CD8-positive, alpha-beta memory T cell (primary cell): ENCODE measurements at regions of chr11 and their contacts with region 1.

Region 1: DNA sequence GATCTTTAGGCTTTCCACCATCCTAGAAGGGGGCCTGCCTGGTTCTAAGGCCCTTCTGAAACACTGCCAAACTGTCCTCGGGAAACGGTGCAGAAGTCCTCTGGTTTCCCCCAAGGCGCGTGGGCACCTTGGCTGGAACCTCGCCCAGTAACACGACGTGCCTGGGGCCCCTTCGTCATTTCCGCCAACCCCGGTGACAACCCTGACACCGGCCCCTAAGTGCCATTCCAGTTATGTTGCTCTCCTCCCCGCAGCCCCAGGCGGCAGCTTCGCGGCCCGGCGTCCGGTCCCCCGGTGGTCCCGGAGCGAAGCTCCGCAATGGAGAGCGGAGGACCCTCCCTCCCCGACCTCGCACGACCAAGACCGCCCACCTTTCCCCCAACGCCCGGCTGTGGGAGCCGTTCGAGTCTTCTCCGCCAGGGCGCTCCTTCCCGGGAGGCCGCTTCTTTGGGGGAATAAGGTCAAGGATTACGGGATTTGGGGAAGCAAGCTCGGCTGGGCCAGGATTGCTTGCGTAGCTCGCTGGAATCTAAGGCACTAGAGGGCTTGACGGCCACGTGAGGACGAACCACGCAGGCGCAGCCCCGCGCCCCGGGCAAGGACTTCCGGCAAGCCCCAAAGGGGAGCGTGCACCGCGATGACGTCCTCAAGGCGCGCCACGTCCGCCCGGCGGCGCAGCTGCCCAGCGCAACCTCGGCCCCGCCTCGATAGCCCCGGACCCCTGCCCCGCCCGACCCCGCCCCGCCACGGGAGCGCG is 626 bp downstream of the RNH1 start:
- DNase-seq: peak; percentile 96 to 98 (median 96)
- H3K4me3 ChIP-seq: peak overlapping the region; percentile 95
- H3K4me3 Mint-ChIP-seq: peak overlapping the region; percentile 89 to 100 (median 98)
- H3K27ac ChIP-seq: peak overlapping the region; percentile 100
- H3K27ac Mint-ChIP-seq: peak overlapping the region; percentile 97 to 100 (median 100)
- H3K4me1 ChIP-seq: peaks cover 31% of the 10 kb centered on the region
- H3K4me1 Mint-ChIP-seq: peaks cover 11 to 38% (median 21%) of the 10 kb centered on the region in 3 donors
- H3K27me3 ChIP-seq: no peaks in the 10 kb centered on the region
- H3K27me3 Mint-ChIP-seq: peaks cover 0 to 4% of the 10 kb centered on the region in 2 donors

Region 2: GRCh38 chr11:396948-397548 is 109.4 kb before region 1 on chr11:
- CTCF ChIA-PET with region 1: no interaction called
- POLR2A ChIA-PET with region 1: no interaction called
- DNase-seq: peak in 4 of 5 donors; percentile 36 to 72 (median 42)
- H3K4me3 ChIP-seq: no peak overlapping the region
- H3K4me3 Mint-ChIP-seq: peak overlapping the region in 5 of 7 donors; percentile 1 to 53 (median 47)
- H3K27ac ChIP-seq: no peak overlapping the region
- H3K27ac Mint-ChIP-seq: no peak overlapping the region
- H3K4me1 ChIP-seq: peaks cover 4% of the 10 kb centered on the region
- H3K4me1 Mint-ChIP-seq: peaks cover 0 to 11% (median 0%) of the 10 kb centered on the region in 3 donors
- H3K27me3 ChIP-seq: no peaks in the 10 kb centered on the region
- H3K27me3 Mint-ChIP-seq: peaks cover 0 to 2% of the 10 kb centered on the region in 2 donors

Region 3: DNA sequence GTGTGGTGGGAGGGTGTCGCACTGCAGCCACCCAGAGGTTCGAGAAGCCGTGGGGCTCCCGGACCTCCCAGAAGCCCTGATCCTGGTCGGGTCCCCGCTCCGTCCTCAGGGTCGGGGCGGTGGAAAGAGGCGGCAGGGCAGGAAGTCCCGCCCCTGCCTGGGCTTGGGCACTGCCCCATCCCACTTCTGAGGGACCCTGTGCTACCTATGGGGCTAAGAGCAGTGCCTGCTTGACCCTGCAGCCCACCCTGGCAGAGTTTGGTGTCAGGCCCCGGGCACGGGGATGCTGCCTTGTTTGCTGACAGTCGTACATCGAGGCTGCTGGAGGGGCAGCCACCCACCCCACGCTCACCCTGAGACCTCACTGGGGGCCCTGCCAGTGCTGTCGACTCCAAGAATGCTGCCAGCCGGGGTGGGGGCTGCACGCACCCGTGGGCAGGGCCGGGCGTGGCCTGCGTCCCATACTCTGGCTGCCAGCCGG is 18.8 kb before region 1 on chr11:
- CTCF ChIA-PET with region 1: no interaction called
- POLR2A ChIA-PET with region 1: no interaction called
- DNase-seq: no peak
- H3K4me3 ChIP-seq: no peak overlapping the region
- H3K4me3 Mint-ChIP-seq: no peak overlapping the region
- H3K27ac ChIP-seq: no peak overlapping the region
- H3K27ac Mint-ChIP-seq: no peak overlapping the region
- H3K4me1 ChIP-seq: no peaks in the 10 kb centered on the region
- H3K4me1 Mint-ChIP-seq: no peaks in the 10 kb centered on the region
- H3K27me3 ChIP-seq: no peaks in the 10 kb centered on the region
- H3K27me3 Mint-ChIP-seq: no peaks in the 10 kb centered on the region

Region 4: GRCh38 chr11:518463-519250 is 12.2 kb after region 1 on chr11:
- CTCF ChIA-PET with region 1: interaction called, 42 read pairs
- POLR2A ChIA-PET with region 1: interaction called, 6 read pairs
- DNase-seq: peak; percentile 76 to 90 (median 85)
- H3K4me3 ChIP-seq: peak overlapping the region; percentile 56
- H3K4me3 Mint-ChIP-seq: peak overlapping the region; percentile 16 to 88 (median 82)
- H3K27ac ChIP-seq: peak overlapping the region; percentile 38
- H3K27ac Mint-ChIP-seq: peak overlapping the region in 7 of 8 donors; percentile 69 to 94 (median 88)
- H3K4me1 ChIP-seq: peaks cover 5% of the 10 kb centered on the region
- H3K4me1 Mint-ChIP-seq: peaks cover 2 to 7% (median 4%) of the 10 kb centered on the region in 3 donors
- H3K27me3 ChIP-seq: no peaks in the 10 kb centered on the region
- H3K27me3 Mint-ChIP-seq: no peaks in the 10 kb centered on the region